Motor neuron (in vitro differentiated cells): ENCODE measurements at regions of chr1 and their contacts with region 1.

Region 1: GRCh38 chr1:86395771-86396497 is at the start of gene ODF2L:
- ATAC-seq: peak; percentile 98 to 100 (median 99)
- H3K4me3 ChIP-seq: peak within 1 kb of the TSS; percentile 53 to 90 (median 62)
- H3K27ac ChIP-seq: peak within 1 kb of the TSS; percentile 60 to 81
- H3K4me1 ChIP-seq: peaks cover 7 to 15% of the 10 kb centered on the region in 2 donors
- total RNA-seq, gene ODF2L: 38.2 to 72.0 (median 53.4) TPM

Region 2: GRCh38 chr1:86741947-86742572 is 346.1 kb after region 1 on chr1:
- in situ Hi-C with region 1: loop called in 1 of 9 experiments (anchors 25 kb)
- ATAC-seq: no peak
- H3K4me3 ChIP-seq: no peak overlapping the region
- H3K27ac ChIP-seq: no peak overlapping the region
- H3K4me1 ChIP-seq: no peaks in the 10 kb centered on the region

Region 3: DNA sequence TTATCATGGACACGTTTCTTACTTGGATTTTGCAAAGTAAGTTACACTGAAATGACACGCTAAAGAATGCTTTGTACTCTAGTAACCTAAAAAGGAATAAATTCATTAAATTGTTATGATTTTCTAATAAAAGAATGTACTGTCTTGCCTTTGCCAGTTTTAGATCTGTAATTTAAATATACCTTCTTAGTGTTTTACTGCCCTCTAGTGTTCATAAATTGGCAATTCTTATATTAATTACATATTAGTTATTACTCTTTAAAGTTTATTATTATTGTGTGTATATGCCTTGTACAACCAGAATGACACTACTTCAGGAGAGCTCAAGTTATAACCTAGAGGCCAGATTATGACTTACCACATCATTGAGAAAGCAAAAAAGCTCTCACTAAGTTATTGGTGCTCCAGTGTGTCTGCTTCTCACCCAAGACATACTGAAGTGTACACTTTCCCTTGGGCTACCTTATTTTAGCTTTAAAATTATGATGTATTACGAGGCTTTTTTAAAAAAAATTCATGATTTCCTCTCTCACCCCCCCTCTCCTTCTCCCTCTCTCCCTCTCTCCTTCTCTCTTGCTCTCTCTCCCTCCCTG is 688.4 kb after region 1 on chr1:
- in situ Hi-C with region 1: loop called in 1 of 9 experiments (anchors 25 kb)
- ATAC-seq: peak in 3 of 8 experiments; percentile 44 to 52 (median 50)
- H3K4me3 ChIP-seq: no peak overlapping the region
- H3K27ac ChIP-seq: no peak overlapping the region
- H3K4me1 ChIP-seq: peaks cover 0 to 7% of the 10 kb centered on the region in 2 donors